ENCODE measurements at regions of chr11 and their contacts with region 1.

Region 1: DNA sequence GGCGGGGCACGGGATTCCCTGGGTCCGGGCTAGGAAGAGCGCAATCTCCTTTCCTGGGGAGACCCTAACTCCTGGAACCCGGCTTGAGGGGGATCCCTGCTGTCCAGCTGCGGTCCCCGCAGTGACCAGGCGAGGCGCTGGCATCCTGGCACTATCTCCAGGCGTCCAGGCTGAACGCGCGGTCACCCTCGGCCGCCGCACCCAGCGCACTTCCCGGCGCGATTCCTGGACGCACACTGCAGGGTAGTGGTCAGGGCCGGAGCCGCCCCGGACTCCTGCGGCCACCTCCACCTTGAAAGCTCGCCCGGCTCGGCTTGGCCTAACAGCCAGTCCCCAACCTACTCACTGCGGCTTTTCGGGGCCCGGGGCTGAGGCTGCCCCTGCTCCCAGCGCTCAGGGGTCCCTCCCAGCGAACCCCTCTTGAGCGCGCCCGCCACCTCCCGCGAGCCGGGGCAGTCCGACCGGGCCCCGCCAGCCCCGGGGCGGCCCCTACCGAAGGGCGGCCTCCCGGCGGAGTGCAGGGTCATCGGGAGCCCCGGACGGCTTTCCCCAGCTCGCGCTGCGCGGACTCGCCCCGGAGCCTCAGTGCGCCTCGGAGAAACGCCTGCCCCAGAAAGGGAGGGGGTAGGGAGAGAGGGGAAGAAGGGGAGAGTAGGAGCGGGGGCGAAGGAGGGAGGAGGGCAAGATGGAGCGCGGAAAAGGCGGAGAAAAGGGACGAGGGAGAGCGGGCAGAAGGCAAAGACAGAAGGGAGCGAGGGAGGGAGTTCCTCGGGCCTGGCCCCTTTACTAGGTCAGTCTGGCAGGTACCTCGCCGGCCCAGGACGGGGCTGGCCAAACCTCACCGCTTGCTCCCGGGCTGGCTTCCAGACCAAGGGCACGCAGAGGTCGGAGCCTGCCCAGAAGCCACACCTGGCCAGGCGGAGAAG is 1.0 kb downstream of the POU2AF3 start:
- ATAC-seq: peak; percentile 77 to 96 (median 90)
- H3K4me3 ChIP-seq: peak overlapping the region; percentile 41 to 71 (median 49)
- H3K27ac ChIP-seq: no peak overlapping the region
- H3K4me1 ChIP-seq: no peaks in the 10 kb centered on the region

Region 2: DNA sequence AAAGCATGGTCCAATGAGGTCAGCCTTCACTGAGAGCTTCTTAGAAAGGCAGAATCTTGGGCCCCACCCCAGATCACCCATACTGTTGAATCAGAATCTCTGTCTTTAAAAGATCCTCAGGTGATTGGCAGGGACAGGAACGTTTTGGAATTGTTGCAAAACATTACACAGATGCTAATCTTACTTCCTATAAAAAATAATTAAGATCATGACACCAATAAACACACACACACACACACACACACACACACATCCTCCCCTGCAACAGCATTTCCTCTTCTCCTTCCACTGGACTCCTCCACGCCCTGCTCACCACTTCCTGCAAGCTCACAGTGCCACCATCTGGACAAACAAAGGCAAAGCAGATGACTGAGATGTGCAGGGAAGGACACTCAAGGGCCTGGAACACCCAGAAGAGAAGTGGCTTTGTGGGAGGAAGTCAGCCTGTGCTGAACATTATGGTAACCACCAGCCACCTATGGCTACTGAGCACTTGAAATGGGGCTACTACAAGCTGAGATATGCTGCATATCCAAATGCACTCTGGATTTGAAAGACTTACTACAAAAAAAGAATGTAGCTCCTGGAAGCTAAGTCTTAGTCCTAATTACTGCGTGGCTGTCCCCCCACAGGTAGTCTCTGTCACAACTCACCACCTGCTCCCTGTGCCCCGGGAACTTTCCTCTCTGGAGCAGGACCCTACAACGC is 147.2 kb after region 1 on chr11:
- in situ Hi-C with region 1: loop called in 3 of 9 experiments (anchors 25 kb)
- ATAC-seq: peak; percentile 89 to 100 (median 100)
- H3K4me3 ChIP-seq: no peak overlapping the region
- H3K27ac ChIP-seq: no peak overlapping the region
- H3K4me1 ChIP-seq: no peaks in the 10 kb centered on the region

Region 3: DNA sequence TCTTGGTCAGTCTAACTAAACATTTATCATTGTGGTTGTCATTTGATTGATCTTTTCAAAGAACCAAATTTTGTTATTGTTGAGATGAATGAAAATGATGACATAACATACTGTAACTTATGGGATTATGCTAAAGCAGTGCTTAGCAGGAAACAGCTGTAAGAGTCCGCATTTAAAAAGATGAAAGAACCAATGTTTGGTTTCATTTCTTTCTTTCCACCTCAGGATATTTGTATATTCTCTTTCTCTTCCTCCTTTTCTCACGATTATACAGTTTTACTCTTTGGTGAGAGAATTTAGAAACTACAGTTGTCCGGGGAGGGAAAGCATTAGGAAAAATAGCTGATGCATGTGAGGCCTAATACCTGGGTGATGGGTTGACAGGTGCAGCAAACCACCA is 751.4 kb after region 1 on chr11:
- in situ Hi-C with region 1: no loop called
- ATAC-seq: no peak
- H3K4me3 ChIP-seq: no peak overlapping the region
- H3K27ac ChIP-seq: no peak overlapping the region
- H3K4me1 ChIP-seq: no peaks in the 10 kb centered on the region

Measured in motor neuron (in vitro differentiated cells).